GM12878 (cell line): ENCODE measurements at regions of chr7 and their contacts with region 1.

Region 1: DNA sequence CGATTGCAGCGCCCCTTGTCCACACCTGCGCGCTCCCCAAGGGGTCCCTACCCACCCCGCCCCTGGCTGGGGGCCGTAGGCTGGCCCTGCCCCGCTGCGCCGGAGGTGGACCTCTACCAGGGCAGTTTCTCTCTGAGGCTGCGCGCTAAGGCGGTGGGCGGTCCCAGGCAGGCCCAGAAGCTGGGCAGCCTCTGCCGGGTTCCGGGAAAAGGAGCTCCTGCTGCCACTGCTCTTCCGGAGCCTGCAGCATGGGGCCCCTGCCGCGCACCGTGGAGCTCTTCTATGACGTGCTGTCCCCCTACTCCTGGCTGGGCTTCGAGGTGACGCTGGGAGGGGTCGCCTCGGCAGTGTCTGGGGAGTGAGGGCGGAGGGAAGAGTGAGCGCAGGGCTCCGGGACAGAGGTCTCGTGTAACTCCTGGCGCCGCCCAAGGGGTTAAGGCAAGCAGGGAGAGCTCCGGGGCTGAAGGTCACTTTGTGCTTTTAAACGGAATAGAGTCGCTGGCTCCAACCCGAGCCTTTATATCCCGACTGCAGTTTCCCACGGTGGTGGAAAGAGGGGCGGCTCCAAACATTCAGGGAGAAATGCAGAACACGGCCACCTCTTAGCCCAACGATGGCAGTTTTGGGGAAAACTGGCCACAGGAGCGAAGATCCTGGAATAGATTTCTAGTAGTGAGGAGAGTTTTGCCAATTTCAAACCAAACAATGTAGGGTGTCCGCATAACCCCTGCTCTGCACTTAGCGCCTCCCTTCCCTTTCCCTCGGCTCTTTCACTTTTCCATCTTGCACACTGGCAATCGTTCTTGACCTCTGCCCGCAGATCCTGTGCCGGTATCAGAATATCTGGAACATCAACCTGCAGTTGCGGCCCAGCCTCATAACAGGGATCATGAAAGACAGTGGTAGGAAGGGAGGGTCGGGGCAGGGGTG is at the start of gene GSTK1:
- DNase-seq: peak; percentile 21
- ATAC-seq: peak; percentile 99
- H3K4me3 ChIP-seq: peak within 1 kb of the TSS; percentile 79
- H3K27ac ChIP-seq: peak within 1 kb of the TSS; percentile 88
- H3K4me1 ChIP-seq: peaks cover 14% of the 10 kb centered on the region
- H3K27me3 ChIP-seq: no peaks in the 10 kb centered on the region
- CTCF ChIP-seq: no peak
- EP300 ChIP-seq: no peak; a peak in 1 of 4 replicates
- POLR2A ChIP-seq: peak; percentile 95
- RAD21 ChIP-seq: no peak
- polyA plus RNA-seq, gene GSTK1: 143 to 166 TPM

Region 2: GRCh38 chr7:143042159-143042789 is 221.3 kb before region 1 on chr7:
- CTCF ChIA-PET with region 1: no interaction called
- POLR2A ChIA-PET with region 1: no interaction called
- RAD21 ChIA-PET with region 1: no interaction called
- SMC1A ChIA-PET with region 1: no interaction called
- in situ Hi-C with region 1: no loop called
- intact Hi-C with region 1: no loop called
- DNase-seq: no peak
- ATAC-seq: peak; percentile 15; the same call in 2 of the 3 replicates
- H3K4me3 ChIP-seq: no peak overlapping the region
- H3K27ac ChIP-seq: no peak overlapping the region
- H3K4me1 ChIP-seq: no peaks in the 10 kb centered on the region
- H3K27me3 ChIP-seq: no peaks in the 10 kb centered on the region
- CTCF ChIP-seq: no peak
- EP300 ChIP-seq: no peak
- POLR2A ChIP-seq: no peak
- RAD21 ChIP-seq: no peak

Region 3: DNA sequence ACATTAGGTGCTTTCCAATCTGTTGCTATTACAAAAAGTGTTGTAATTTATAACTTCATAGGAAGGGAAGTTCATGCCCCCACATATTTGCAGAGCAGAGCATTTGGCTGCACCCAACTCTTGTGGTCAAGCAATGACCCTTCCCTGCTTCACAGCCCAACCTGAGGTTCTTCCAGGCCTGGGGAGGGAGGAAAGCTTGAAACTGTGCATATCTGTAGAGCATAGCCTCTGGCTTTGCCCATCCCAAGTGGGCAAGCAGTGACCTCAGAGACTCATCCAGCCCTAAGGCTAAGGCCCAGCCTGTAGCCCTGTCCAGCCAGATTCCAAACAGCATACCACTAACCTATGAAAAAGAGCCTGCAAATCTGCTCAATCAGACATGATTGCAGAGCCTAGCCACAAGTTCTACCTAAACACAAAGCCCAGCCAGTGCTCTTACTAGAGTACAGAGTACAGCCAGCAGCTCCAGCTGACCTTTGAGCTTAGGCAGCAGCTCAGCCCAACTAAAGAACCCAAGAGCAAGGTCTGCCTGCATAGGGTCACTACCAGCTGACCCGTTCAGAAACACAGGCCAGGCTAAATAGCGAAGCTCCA is 14.7 kb before region 1 on chr7:
- CTCF ChIA-PET with region 1: interaction called, 3 read pairs
- POLR2A ChIA-PET with region 1: no interaction called
- RAD21 ChIA-PET with region 1: no interaction called
- SMC1A ChIA-PET with region 1: interaction called, 10 read pairs
- in situ Hi-C with region 1: no loop called
- intact Hi-C with region 1: no loop called
- DNase-seq: no peak
- ATAC-seq: no peak
- H3K4me3 ChIP-seq: no peak overlapping the region
- H3K27ac ChIP-seq: no peak overlapping the region
- H3K4me1 ChIP-seq: no peaks in the 10 kb centered on the region
- H3K27me3 ChIP-seq: no peaks in the 10 kb centered on the region
- CTCF ChIP-seq: no peak
- EP300 ChIP-seq: no peak
- POLR2A ChIP-seq: no peak
- RAD21 ChIP-seq: no peak

Region 4: GRCh38 chr7:143279186-143280098 is 15.9 kb after region 1 on chr7:
- CTCF ChIA-PET with region 1: interaction called, 10 read pairs
- POLR2A ChIA-PET with region 1: interaction called, 7 read pairs
- RAD21 ChIA-PET with region 1: interaction called, 3 read pairs
- SMC1A ChIA-PET with region 1: interaction called, 6 read pairs
- in situ Hi-C with region 1: no loop called
- intact Hi-C with region 1: no loop called
- DNase-seq: no peak
- ATAC-seq: peak; percentile 57
- H3K4me3 ChIP-seq: no peak overlapping the region
- H3K27ac ChIP-seq: no peak overlapping the region
- H3K4me1 ChIP-seq: peaks cover 7% of the 10 kb centered on the region
- H3K27me3 ChIP-seq: no peaks in the 10 kb centered on the region
- CTCF ChIP-seq: no peak
- EP300 ChIP-seq: no peak
- POLR2A ChIP-seq: no peak
- RAD21 ChIP-seq: no peak

Region 5: DNA sequence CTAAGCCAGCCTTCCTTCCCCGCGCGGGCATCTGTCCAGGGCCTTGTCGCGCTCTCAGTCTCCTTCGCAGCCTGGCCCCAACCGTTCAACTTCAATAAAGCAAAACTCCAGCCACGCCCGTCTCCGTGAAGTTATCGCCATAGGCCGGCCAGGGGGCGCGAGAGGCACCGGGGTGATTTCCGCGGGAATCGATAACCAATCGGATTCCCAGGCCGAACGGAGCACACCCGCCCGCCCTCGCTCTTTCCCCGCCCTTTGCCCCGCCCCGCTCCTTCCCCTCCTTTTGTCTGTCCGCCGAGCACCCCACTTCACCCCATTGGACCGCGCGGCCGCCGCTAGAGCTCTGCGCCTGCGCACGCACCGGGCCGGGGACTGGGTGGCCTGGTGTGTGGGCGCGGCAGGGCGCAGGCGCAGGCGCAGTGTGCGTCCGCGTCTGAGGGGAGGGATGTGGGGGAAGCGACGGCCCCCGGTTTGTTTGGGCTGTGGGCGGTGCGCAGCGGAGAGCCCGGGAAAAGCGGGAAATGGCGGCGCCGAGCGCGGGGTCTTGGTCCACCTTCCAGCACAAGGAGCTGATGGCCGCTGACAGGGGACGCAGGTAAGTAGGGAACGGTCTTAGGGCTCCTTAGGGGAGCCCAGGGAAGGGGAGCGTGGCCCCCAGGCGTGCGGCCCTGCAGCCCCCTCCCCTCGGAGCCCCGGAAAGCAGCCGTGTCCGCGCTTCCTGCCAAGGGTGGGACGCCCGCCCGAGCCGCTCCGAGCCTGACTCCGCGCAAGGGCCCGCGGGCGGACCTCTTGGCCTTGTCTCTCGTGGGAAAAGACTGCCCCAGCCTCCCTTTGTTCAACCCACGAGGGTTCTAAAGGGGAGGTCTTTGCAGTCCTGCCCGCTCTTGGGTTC is 24.6 kb after region 1 on chr7 and contains the start of gene CASP2:
- CTCF ChIA-PET with region 1: interaction called, 7 read pairs
- POLR2A ChIA-PET with region 1: interaction called, 9 read pairs
- RAD21 ChIA-PET with region 1: interaction called, 5 read pairs
- SMC1A ChIA-PET with region 1: interaction called, 7 read pairs
- in situ Hi-C with region 1: no loop called
- intact Hi-C with region 1: loop called (anchors 2 kb)
- DNase-seq: peak; percentile 91
- ATAC-seq: peak; percentile 95
- H3K4me3 ChIP-seq: peak within 1 kb of the TSS; percentile 78
- H3K27ac ChIP-seq: peak within 1 kb of the TSS; percentile 92
- H3K4me1 ChIP-seq: peaks cover 10% of the 10 kb centered on the region
- H3K27me3 ChIP-seq: no peaks in the 10 kb centered on the region
- CTCF ChIP-seq: peak in 1 of 3 experiments; percentile 24; a peak in 1 of 6 replicates
- EP300 ChIP-seq: no peak
- POLR2A ChIP-seq: peak; percentile 90
- RAD21 ChIP-seq: no peak
- polyA plus RNA-seq, gene CASP2: 12.1 to 17.4 TPM